Mammary epithelial cell (primary cell): ENCODE measurements at regions of chr1 and their contacts with region 1.

Region 1: GRCh38 chr1:231757101-231757404 is 130.5 kb downstream of the DISC1 start:
- DNase-seq: no peak
- H3K4me3 ChIP-seq: no peak overlapping the region
- H3K27ac ChIP-seq: no peak overlapping the region
- H3K4me1 ChIP-seq: no peaks in the 10 kb centered on the region
- H3K27me3 ChIP-seq: peaks cover 2% of the 10 kb centered on the region
- CTCF ChIP-seq: no peak

Region 2: GRCh38 chr1:231626535-231626945 is 130.5 kb before region 1 on chr1 and contains the start of gene DISC1:
- CTCF ChIA-PET with region 1: no interaction called
- dilution Hi-C with region 1: no loop called
- in situ Hi-C with region 1: no loop called
- intact Hi-C with region 1: no loop called
- DNase-seq: peak; percentile 73
- H3K4me3 ChIP-seq: peak within 1 kb of the TSS; percentile 50 to 74 (median 59)
- H3K27ac ChIP-seq: no peak within 1 kb of the TSS
- H3K4me1 ChIP-seq: peaks cover 7% of the 10 kb centered on the region
- H3K27me3 ChIP-seq: peaks cover 3% of the 10 kb centered on the region
- CTCF ChIP-seq: no peak
- total RNA-seq, gene DISC1: 0.09 to 0.17 TPM

Region 3: GRCh38 chr1:231778009-231778719 is 21.1 kb after region 1 on chr1:
- CTCF ChIA-PET with region 1: no interaction called
- dilution Hi-C with region 1: no loop called
- in situ Hi-C with region 1: no loop called
- intact Hi-C with region 1: loop called (anchors 2 kb)
- DNase-seq: peak; percentile 25
- H3K4me3 ChIP-seq: no peak overlapping the region
- H3K27ac ChIP-seq: no peak overlapping the region
- H3K4me1 ChIP-seq: no peaks in the 10 kb centered on the region
- H3K27me3 ChIP-seq: no peaks in the 10 kb centered on the region
- CTCF ChIP-seq: no peak

Region 4: GRCh38 chr1:231806623-231807495 is 49.8 kb after region 1 on chr1:
- CTCF ChIA-PET with region 1: no interaction called
- dilution Hi-C with region 1: no loop called
- in situ Hi-C with region 1: no loop called
- intact Hi-C with region 1: loop called (anchors 1 kb)
- DNase-seq: peak; percentile 34
- H3K4me3 ChIP-seq: no peak overlapping the region
- H3K27ac ChIP-seq: no peak overlapping the region
- H3K4me1 ChIP-seq: peaks cover 6% of the 10 kb centered on the region
- H3K27me3 ChIP-seq: no peaks in the 10 kb centered on the region
- CTCF ChIP-seq: peak; percentile 52 to 70

Region 5: GRCh38 chr1:231866392-231867331 is 109.6 kb after region 1 on chr1:
- CTCF ChIA-PET with region 1: no interaction called
- dilution Hi-C with region 1: no loop called
- in situ Hi-C with region 1: no loop called
- intact Hi-C with region 1: loop called (anchors 2 kb)
- DNase-seq: peak; percentile 17
- H3K4me3 ChIP-seq: no peak overlapping the region
- H3K27ac ChIP-seq: no peak overlapping the region
- H3K4me1 ChIP-seq: no peaks in the 10 kb centered on the region
- H3K27me3 ChIP-seq: no peaks in the 10 kb centered on the region
- CTCF ChIP-seq: peak; percentile 73 to 82

Region 6: GRCh38 chr1:232306269-232306961 is 549.4 kb after region 1 on chr1:
- CTCF ChIA-PET with region 1: no interaction called
- dilution Hi-C with region 1: no loop called
- in situ Hi-C with region 1: no loop called
- intact Hi-C with region 1: loop called (anchors 10 kb)
- DNase-seq: no peak
- H3K4me3 ChIP-seq: no peak overlapping the region
- H3K27ac ChIP-seq: no peak overlapping the region
- H3K4me1 ChIP-seq: no peaks in the 10 kb centered on the region
- H3K27me3 ChIP-seq: no peaks in the 10 kb centered on the region
- CTCF ChIP-seq: peak; percentile 18 to 38